ENCODE measurements at regions of chr2 and their contacts with region 1.

Region 1: DNA sequence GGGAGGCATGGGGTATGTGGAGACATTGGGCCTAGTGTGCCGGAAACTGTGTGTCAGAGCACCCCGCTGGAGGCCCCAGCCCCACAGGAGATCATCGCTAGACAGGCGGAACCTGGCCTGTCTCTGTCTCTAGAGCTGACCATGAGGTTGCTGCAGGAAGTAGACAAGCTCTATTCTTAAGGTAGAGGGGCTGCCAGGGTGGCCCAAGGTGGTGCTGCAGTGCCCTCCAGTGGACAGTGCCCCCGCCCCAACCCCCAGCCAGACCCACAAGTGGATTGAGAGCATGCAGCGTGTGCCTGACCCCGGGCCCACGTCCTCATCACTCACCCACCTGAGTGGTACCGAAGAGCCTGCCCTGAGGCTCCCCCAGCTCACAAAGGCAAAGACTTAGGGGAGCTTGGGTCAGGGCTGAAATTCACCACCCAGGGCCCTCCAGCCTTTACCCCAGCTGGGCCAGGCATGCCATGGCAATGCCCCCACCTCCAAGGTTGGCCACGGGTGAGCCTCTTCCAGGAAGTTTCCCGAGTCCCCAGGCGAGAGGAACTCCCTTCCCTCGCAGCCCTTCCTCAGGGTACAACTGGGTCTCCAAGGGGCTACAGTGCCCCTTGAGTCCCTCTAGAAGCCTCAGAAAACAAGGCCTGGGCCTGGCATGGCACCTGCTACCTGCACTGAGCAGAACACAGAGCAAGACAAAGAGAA is 155.0 kb downstream of the TTC32 start:
- DNase-seq: no peak
- H3K4me3 ChIP-seq: no peak overlapping the region
- H3K27ac ChIP-seq: peak overlapping the region; percentile 56 to 66
- H3K4me1 ChIP-seq: peaks cover 0 to 47% (median 28%) of the 10 kb centered on the region in 4 donors
- H3K27me3 ChIP-seq: no peaks in the 10 kb centered on the region
- CTCF ChIP-seq: no peak

Region 2: GRCh38 chr2:19801367-19802080 is 54.8 kb after region 1 on chr2:
- intact Hi-C with region 1: loop called (anchors 5 kb)
- DNase-seq: peak; percentile 94 to 98
- H3K4me3 ChIP-seq: no peak overlapping the region
- H3K27ac ChIP-seq: peak overlapping the region; percentile 73 to 77
- H3K4me1 ChIP-seq: peaks cover 0 to 45% (median 34%) of the 10 kb centered on the region in 4 donors
- H3K27me3 ChIP-seq: no peaks in the 10 kb centered on the region
- CTCF ChIP-seq: no peak

Region 3: DNA sequence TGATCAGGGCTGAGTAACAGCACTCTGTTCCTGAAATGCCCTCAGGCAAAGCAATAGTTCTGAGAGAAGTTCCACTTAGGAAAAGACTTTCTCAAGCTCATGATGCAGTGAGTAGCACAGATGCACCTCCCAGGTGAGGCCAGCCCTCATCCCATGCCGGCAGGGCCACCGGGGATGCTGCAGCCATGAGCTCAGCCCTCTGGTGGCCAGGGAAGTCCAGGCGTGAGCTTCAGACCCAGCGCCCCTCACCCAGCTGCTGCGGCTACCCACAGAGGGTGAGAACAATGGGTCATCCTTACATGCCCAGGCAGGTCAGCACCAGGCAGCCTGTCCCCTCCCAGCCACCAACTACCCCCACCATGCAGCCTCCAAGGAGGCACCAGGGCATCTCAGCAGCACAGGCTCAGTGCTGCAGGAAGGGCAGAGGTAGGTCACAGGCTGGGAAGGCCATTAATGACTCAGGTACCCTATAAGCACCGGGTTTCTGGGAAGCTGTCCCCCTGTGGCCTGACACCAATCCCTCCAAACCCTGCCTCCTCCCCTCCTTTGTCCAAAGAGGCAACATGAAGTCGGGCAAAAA is 104.4 kb after region 1 on chr2:
- intact Hi-C with region 1: loop called (anchors 10 kb)
- DNase-seq: no peak
- H3K4me3 ChIP-seq: no peak overlapping the region
- H3K27ac ChIP-seq: no peak overlapping the region
- H3K4me1 ChIP-seq: peaks cover 0 to 16% (median 8%) of the 10 kb centered on the region in 4 donors
- H3K27me3 ChIP-seq: no peaks in the 10 kb centered on the region
- CTCF ChIP-seq: no peak

Region 4: GRCh38 chr2:20164061-20164733 is 417.4 kb after region 1 on chr2:
- intact Hi-C with region 1: no loop called
- DNase-seq: peak in 1 of 2 donors; percentile 55
- H3K4me3 ChIP-seq: no peak overlapping the region
- H3K27ac ChIP-seq: no peak overlapping the region
- H3K4me1 ChIP-seq: no peaks in the 10 kb centered on the region
- H3K27me3 ChIP-seq: peaks cover 0 to 28% of the 10 kb centered on the region in 2 donors
- CTCF ChIP-seq: no peak

Measured in tibial artery (tissue), 4 donors.